ENCODE measurements at regions of chr15 and their contacts with region 1.

Region 1: DNA sequence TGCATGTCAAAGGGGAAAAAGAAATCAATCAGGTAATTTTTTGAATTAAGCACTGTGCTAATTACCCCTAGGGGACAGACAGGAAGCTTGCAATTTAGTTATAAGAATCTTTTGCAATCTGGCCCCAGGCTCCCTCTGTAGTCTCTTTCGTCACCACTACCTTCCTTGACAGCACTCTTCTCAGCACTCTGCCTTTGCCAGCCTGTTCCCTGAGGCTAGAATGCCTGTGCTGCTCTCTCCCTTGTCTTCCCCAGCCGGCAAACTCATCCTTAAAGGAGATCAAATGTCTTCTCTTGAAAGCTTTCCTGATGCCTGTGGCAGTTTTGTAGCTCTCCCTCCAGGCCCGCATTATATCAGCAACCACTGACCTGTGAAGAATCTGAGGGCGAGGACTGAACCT is 32.4 kb upstream of the PRTG start:
- DNase-seq: peak; percentile 68 to 87
- H3K4me3 ChIP-seq: no peak overlapping the region
- H3K27ac ChIP-seq: 0 out of 2 replicates have a peak overlapping the region, but pooled peaks have one; percentile 35
- H3K4me1 ChIP-seq: peaks cover 15% of the 10 kb centered on the region
- H3K27me3 ChIP-seq: no peaks in the 10 kb centered on the region
- CTCF ChIP-seq: no peak

Region 2: DNA sequence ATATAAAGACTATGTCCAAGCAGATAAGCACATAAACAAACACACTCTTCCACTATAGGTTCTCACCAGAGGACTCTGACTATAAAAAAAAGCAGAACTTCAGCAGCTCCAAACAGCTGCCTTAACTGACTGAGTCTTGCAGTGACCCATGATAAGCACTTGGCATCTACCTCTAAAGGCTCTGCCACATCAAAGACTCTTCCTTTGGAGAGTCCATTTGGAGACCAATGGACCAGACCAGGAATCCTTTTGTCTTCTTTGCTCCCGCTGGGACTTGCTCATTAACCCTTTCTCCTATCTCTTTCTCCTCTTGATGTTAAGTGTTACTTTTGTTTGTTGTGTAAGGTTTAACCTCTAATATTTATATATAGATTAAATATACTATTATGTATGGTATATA is 1002.7 kb before region 1 on chr15:
- CTCF ChIA-PET with region 1: interaction called, 10 read pairs
- POLR2A ChIA-PET with region 1: no interaction called
- intact Hi-C with region 1: no loop called
- DNase-seq: no peak
- H3K4me3 ChIP-seq: no peak overlapping the region
- H3K27ac ChIP-seq: no peak overlapping the region
- H3K4me1 ChIP-seq: no peaks in the 10 kb centered on the region
- H3K27me3 ChIP-seq: peaks cover under 1% of the 10 kb centered on the region; the same call in 1 of the 2 replicates
- CTCF ChIP-seq: no peak

Region 3: DNA sequence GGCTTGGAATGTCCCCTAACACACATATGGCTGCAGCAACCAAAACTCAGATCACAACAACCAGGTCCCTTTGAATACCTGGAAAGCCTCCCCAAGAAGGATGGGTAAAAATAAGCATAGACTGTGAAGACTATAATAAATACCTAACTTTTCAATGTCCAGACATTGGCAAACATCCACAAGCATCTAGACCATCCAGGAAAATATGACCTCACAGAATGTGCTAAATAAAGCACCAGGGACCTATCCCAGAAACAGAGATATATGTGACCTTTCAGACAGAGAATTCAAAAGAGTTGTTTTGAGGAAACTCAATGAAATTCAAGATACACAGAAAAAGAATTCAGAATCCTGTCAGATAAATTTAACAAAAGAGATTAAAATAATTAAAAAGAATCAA is 108.9 kb after region 1 on chr15:
- CTCF ChIA-PET with region 1: no interaction called
- POLR2A ChIA-PET with region 1: no interaction called
- intact Hi-C with region 1: no loop called
- DNase-seq: no peak
- H3K4me3 ChIP-seq: no peak overlapping the region
- H3K27ac ChIP-seq: no peak overlapping the region
- H3K4me1 ChIP-seq: no peaks in the 10 kb centered on the region
- H3K27me3 ChIP-seq: no peaks in the 10 kb centered on the region
- CTCF ChIP-seq: no peak

Measured in PC-9 (cell line).